ENCODE measurements at regions of chr17 and their contacts with region 1.

Region 1: GRCh38 chr17:2386400-2387085 is 14.3 kb downstream of the MNT start:
- DNase-seq: no peak
- H3K4me3 ChIP-seq: no peak overlapping the region
- H3K27ac ChIP-seq: no peak overlapping the region
- H3K4me1 ChIP-seq: no peaks in the 10 kb centered on the region
- H3K27me3 ChIP-seq: no peaks in the 10 kb centered on the region
- CTCF ChIP-seq: no peak

Region 2: DNA sequence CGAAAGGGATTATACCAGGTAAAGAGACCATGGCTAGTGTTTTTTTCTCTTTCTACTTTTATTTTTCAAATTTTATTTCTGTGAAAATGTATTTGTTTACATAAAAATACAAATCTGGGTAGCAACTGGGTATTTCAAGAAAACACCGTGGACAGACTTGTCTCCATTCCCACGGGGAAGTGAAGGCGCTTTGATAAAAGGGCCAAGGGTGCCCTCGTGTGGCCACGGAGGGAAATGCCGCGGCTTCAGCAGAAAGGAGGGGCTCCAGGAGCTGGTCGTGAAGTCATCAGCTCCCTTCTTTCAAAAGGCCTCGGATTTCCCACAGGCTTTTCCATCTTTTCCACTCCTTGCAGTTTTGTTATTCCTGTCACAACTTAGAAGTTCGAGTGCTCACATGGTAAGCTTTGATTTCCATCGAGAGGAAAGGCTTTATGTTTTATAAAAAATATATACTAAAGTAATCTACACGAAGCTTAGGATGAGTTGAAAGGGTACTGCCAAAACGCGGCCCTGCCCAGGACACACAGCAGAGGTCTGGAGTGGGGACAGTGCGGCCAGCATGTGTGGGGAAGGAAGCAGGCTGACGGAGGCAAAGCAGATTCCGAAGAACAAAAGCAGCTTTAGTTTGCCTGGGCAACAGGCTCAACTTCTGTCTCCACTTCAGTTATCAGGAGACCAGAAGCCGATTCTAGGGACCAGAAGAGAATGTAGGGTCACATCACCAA is 29.6 kb after region 1 on chr17:
- CTCF ChIA-PET with region 1: interaction called, 79 read pairs
- POLR2A ChIA-PET with region 1: no interaction called
- intact Hi-C with region 1: loop called (anchors 1 kb)
- DNase-seq: peak; percentile 90
- H3K4me3 ChIP-seq: no peak overlapping the region
- H3K27ac ChIP-seq: peak overlapping the region; percentile 24
- H3K4me1 ChIP-seq: peaks cover 9% of the 10 kb centered on the region
- H3K27me3 ChIP-seq: no peaks in the 10 kb centered on the region
- CTCF ChIP-seq: peak; percentile 98

Region 3: GRCh38 chr17:2453325-2453724 is 66.8 kb after region 1 on chr17:
- CTCF ChIA-PET with region 1: interaction called, 26 read pairs
- POLR2A ChIA-PET with region 1: no interaction called
- intact Hi-C with region 1: no loop called
- DNase-seq: no peak
- H3K4me3 ChIP-seq: no peak overlapping the region
- H3K27ac ChIP-seq: no peak overlapping the region
- H3K4me1 ChIP-seq: peaks cover 22% of the 10 kb centered on the region
- H3K27me3 ChIP-seq: no peaks in the 10 kb centered on the region
- CTCF ChIP-seq: no peak

Region 4: DNA sequence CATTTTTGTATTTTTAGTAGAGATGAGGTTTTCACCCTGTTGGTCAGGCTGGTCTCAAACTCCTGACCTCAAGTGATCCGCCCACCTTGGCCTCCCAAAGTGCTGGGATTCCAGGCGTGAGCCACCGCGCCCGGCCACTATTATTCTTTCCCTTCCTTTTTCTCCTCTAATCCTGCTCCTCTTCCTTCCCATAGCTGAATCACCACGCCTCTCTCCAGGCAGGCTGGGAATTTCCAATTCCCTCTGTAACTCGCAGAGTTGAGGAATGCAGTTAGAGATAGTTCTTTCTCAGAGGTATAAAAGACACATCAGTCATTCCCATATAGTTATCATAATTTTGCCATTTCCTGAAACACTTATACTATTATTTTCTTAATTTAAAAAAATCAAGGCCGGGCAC is 113.9 kb after region 1 on chr17:
- CTCF ChIA-PET with region 1: no interaction called
- POLR2A ChIA-PET with region 1: no interaction called
- intact Hi-C with region 1: no loop called
- DNase-seq: no peak
- H3K4me3 ChIP-seq: no peak overlapping the region
- H3K27ac ChIP-seq: no peak overlapping the region
- H3K4me1 ChIP-seq: no peaks in the 10 kb centered on the region
- H3K27me3 ChIP-seq: no peaks in the 10 kb centered on the region
- CTCF ChIP-seq: no peak

Region 5: DNA sequence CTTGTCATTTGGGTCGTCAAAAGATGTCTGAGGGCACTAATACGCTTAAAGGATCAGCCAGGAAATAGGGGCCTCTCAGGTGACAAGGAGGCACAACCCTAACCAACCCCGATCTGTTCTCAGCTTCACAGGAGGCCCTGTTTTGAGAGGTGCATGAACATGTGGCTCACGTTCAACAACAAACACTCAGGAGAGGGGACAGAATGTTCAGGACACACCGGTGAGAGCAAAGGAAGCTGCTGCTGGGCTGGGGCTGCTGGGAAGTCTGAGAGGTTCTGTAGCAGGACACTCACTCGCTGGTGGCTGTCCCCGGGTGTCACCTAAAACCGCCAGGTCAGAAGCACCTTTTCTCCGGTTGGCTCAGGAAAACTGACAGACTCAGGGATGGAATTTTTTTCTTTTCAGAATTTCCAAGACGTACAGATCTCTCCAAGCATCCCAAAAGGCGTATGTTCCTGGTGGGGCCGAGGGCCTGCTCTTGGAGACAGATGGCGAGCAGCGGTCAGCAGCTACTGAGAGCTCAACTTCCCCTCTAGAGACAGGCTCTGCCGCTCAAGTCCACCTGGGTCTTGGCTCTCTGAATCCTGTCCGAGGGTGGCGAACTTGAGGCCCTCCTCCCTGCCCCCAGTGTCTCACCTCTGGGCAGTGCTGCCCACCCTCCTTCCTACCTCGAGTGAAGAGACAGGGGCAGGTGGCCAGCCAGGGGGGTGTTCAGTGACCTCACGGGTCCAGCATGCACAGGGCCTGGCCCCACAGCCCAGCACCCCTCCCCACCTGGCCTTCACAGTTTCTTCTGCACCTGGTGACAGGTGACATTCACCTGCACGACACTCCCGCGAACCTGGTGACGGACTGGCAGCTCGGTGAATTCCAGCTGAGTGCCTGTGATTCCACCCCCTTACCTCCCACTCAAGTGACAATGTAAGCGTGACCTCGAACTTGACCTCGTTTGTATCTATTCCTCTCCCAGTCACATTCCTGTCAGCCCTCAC is 302.1 kb after region 1 on chr17:
- CTCF ChIA-PET with region 1: interaction called, 4 read pairs
- POLR2A ChIA-PET with region 1: no interaction called
- intact Hi-C with region 1: loop called (anchors 10 kb)
- DNase-seq: no peak
- H3K4me3 ChIP-seq: no peak overlapping the region
- H3K27ac ChIP-seq: peak overlapping the region; percentile 37
- H3K4me1 ChIP-seq: no peaks in the 10 kb centered on the region
- H3K27me3 ChIP-seq: no peaks in the 10 kb centered on the region
- CTCF ChIP-seq: no peak

Region 6: DNA sequence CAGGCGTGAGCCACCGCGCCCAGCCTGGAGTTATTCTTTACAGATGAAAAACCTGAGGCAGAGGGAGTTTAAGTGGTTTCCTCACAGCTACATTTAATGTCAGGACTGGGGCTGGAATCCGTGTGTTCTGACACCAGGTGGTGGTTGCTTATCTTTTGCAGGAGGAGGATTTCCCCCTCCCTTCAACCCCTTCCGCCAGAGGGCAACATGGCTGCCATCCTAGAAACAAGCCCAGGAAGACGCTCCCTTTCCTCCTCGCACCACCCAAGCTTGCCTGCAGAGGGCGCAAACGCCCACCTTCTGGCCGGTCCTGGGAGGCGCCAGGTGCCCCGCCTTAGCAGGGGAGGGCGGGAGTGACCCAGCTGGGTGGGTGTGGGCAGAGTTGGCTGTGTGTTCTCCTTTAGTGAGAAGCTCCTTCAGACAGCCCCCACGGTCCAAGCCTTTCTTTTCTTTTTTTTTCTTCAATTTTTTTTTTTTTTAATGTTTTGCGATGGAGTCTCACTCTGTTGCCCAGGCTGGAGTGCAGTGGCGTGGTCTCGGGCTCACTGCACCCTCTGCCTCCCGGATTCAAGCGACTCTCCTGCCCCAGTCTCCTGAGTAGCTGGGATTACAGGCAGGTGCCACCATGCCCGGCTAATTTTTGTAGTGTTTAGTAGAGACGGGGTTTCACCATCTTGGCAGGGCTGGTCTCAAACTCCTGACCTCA is 399.8 kb after region 1 on chr17:
- CTCF ChIA-PET with region 1: interaction called, 10 read pairs
- POLR2A ChIA-PET with region 1: no interaction called
- intact Hi-C with region 1: no loop called
- DNase-seq: peak; percentile 91
- H3K4me3 ChIP-seq: no peak overlapping the region
- H3K27ac ChIP-seq: no peak overlapping the region
- H3K4me1 ChIP-seq: no peaks in the 10 kb centered on the region
- H3K27me3 ChIP-seq: no peaks in the 10 kb centered on the region
- CTCF ChIP-seq: peak; percentile 97

Region 7: DNA sequence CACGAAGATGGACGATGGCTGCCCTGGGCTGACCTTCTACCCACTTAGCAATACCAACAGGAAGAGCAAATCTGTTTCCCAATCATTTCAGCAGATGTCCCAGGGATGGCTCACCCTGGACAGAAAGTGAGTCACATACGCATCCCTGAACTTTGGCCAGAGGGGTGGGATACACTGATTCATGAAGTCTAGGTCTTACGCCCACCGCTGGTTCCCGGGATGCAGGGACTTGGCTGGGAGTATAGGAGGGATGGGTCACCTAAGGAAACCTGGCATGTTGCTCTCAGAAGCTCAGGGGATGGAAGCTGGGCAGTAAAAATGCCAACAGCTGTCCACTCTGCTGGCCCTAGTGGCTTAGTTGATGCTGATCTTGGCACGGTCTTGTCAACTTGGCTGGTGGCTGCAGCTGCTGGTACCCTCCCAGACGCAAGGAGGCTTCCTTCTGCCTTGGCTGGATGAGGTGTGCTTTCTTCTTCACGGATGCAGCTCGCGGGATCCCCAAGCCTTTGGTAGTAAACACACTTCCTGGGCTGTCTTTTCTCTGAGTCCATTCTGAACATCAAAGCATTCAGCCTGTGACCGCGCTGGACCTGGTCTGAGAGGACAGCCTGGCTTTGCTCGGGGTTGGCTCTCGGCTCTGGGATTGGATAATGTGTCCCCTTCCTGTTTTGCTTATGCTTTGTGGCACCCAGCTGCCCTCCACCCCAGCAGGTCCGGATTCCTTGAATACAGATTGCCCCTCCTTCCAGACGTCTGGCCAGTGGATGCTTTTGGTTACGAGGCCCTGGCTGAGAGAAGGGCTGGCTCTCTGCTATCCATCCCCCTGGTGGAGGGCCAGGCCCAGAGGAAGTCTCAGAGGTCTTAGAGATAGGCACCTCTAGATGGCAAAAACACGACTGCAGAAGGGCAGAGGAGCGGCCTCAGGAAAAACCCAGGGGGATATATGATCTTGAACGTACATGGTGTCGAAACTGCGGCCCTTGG is 481.2 kb after region 1 on chr17:
- CTCF ChIA-PET with region 1: no interaction called
- POLR2A ChIA-PET with region 1: no interaction called
- intact Hi-C with region 1: no loop called
- DNase-seq: no peak
- H3K4me3 ChIP-seq: no peak overlapping the region
- H3K27ac ChIP-seq: no peak overlapping the region
- H3K4me1 ChIP-seq: no peaks in the 10 kb centered on the region
- H3K27me3 ChIP-seq: peaks cover 3% of the 10 kb centered on the region
- CTCF ChIP-seq: no peak